T-cell (primary cell): ENCODE measurements at regions of chr9 and their contacts with region 1.

Region 1: DNA sequence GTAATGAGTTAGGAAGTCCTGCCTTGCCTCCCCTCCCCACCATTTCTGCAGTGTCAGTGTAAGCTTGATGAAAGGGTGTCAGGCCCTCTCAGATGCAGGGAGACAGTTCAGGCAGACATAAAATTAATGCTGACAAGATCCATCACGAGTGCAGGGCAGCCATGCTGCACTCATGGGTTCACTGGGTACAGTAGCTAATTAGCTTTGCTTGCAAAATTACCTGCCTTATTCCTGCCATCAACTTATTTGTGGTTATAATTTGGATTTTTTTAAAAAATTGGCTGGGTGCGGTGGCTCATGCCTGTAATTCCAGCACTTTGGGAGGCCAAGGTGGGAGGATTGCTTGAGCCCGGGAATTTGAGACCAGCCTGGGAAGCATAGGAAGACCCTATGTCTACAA is 17.9 kb downstream of the GALNT12 start:
- DNase-seq: no peak
- ATAC-seq: no peak
- H3K4me3 ChIP-seq: no peak overlapping the region
- H3K4me3 Mint-ChIP-seq: no peak overlapping the region
- H3K27ac ChIP-seq: no peak overlapping the region
- H3K27ac Mint-ChIP-seq: no peak overlapping the region
- H3K4me1 ChIP-seq: no peaks in the 10 kb centered on the region
- H3K4me1 Mint-ChIP-seq: no peaks in the 10 kb centered on the region
- H3K27me3 ChIP-seq: no peaks in the 10 kb centered on the region
- H3K27me3 Mint-ChIP-seq: no peaks in the 10 kb centered on the region

Region 2: DNA sequence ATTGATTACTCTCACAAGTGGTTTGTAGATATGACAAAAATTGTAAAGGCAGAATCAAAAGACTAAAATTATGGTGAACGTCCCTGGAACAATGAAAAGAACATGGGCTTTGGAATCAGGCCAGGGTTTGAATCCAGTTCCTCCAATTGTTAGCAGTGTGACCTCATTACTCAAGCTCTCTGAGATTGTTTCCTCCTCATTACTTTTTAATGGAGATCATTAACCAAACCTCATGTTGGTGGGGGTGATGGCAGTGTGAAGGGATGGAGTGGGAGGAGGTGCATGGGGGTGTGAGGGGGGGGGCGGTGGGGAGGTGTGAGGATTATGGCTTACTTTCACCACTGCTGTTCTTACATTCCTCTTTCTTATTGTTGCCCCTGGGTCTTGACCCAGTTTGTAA is 1016.4 kb before region 1 on chr9:
- CTCF ChIA-PET with region 1: no interaction called
- POLR2A ChIA-PET with region 1: interaction called in 1 of 2 experiments, 10 read pairs
- DNase-seq: no peak
- ATAC-seq: no peak
- H3K4me3 ChIP-seq: no peak overlapping the region
- H3K4me3 Mint-ChIP-seq: no peak overlapping the region
- H3K27ac ChIP-seq: no peak overlapping the region
- H3K27ac Mint-ChIP-seq: no peak overlapping the region
- H3K4me1 ChIP-seq: peaks cover 0 to 3% of the 10 kb centered on the region in 2 experiments
- H3K4me1 Mint-ChIP-seq: peaks cover 2 to 4% (median 3%) of the 10 kb centered on the region in 3 donors
- H3K27me3 ChIP-seq: peaks cover 13 to 18% of the 10 kb centered on the region in 2 experiments
- H3K27me3 Mint-ChIP-seq: peaks cover 15 to 18% of the 10 kb centered on the region in 2 donors

Region 3: GRCh38 chr9:98635374-98635773 is 190.0 kb before region 1 on chr9:
- CTCF ChIA-PET with region 1: no interaction called
- POLR2A ChIA-PET with region 1: interaction called in 1 of 2 experiments, 16 read pairs
- DNase-seq: no peak
- ATAC-seq: no peak
- H3K4me3 ChIP-seq: no peak overlapping the region
- H3K4me3 Mint-ChIP-seq: no peak overlapping the region
- H3K27ac ChIP-seq: no peak overlapping the region
- H3K27ac Mint-ChIP-seq: no peak overlapping the region
- H3K4me1 ChIP-seq: no peaks in the 10 kb centered on the region
- H3K4me1 Mint-ChIP-seq: no peaks in the 10 kb centered on the region
- H3K27me3 ChIP-seq: peaks cover 0 to 8% of the 10 kb centered on the region in 2 experiments
- H3K27me3 Mint-ChIP-seq: peaks cover 8 to 10% of the 10 kb centered on the region in 2 donors